Heart right ventricle (tissue), 16 donors: ENCODE measurements at regions of chr4 and their contacts with region 1.

Region 1: GRCh38 chr4:127782274-127783025 is at the start of gene HSPA4L:
- DNase-seq: peak; percentile 43 to 67
- ATAC-seq: peak; percentile 28 to 98 (median 84)
- H3K4me3 ChIP-seq: peak within 1 kb of the TSS; percentile 48 to 91 (median 74)
- H3K27ac ChIP-seq: peak within 1 kb of the TSS; percentile 20 to 85 (median 73)
- H3K4me1 ChIP-seq: peaks cover 0 to 25% (median 10%) of the 10 kb centered on the region in 9 donors
- H3K27me3 ChIP-seq: peaks cover 0 to 46% (median 0%) of the 10 kb centered on the region in 7 donors
- CTCF ChIP-seq: peak in 7 of 9 donors; percentile 28 to 61 (median 38)
- total RNA-seq, gene HSPA4L: 2.4 to 21.9 (median 15.6) TPM

Region 2: DNA sequence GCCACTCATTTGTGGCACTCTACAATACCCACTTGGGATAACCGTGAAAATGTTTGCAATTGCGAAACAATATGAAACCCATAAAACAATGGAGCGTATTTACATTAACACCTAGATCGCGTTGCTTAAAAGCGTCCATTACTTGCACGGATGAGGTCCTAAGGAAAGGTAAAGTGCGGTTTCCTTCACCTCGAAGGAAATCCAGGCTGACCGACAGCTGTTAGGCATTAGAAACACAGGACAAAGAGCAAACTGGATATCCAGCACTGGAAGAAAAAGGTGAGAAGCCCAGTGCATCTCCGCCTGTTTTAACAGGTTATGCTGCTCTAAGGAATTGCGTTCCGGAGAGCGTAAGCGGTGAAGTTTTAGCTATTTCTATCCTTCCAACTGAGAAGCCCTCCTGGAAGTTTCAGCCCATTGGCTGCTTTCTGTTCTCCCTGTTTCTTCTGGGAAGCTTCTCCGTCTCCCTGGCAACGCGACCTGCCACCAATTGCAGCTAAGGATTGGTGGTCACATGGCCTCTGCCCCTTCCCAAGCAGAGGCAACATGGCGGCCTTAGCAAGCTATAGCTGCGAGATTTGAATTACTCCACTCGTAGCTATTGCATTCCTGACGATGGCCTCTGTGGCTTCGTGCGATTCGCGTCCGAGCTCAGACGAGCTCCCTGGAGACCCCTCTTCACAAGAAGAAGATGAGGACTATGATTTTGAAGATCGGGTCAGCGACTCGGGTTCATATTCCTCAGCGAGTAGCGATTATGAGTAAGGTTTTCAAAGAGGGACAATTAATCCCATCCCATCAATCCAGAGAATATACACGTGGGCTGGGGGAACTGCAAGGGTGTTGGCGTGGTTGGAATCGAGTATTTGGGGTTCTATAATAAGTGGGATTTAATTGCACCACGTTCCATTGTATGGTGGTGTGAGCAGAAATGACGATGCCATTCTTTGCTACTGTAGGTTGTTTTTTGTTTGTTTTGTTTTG is 149.7 kb before region 1 on chr4 and contains the start of gene INTU:
- intact Hi-C with region 1: loop called in 1 of 10 experiments (anchors 2 kb)
- DNase-seq: peak; percentile 88 to 94
- ATAC-seq: peak; percentile 98 to 100 (median 100)
- H3K4me3 ChIP-seq: peak within 1 kb of the TSS; percentile 44 to 85 (median 68)
- H3K27ac ChIP-seq: peak within 1 kb of the TSS in 6 of 10 donors; percentile 34 to 73 (median 52)
- H3K4me1 ChIP-seq: peaks cover 0 to 21% (median 9%) of the 10 kb centered on the region in 9 donors
- H3K27me3 ChIP-seq: peaks cover 0 to 6% (median 0%) of the 10 kb centered on the region in 7 donors
- CTCF ChIP-seq: no peak
- total RNA-seq, gene INTU: 3.0 to 6.9 (median 4.5) TPM

Region 3: GRCh38 chr4:127685292-127685691 is 97.2 kb before region 1 on chr4:
- intact Hi-C with region 1: no loop called
- DNase-seq: no peak
- ATAC-seq: no peak
- H3K4me3 ChIP-seq: no peak overlapping the region
- H3K27ac ChIP-seq: no peak overlapping the region
- H3K4me1 ChIP-seq: no peaks in the 10 kb centered on the region
- H3K27me3 ChIP-seq: no peaks in the 10 kb centered on the region
- CTCF ChIP-seq: no peak

Region 4: DNA sequence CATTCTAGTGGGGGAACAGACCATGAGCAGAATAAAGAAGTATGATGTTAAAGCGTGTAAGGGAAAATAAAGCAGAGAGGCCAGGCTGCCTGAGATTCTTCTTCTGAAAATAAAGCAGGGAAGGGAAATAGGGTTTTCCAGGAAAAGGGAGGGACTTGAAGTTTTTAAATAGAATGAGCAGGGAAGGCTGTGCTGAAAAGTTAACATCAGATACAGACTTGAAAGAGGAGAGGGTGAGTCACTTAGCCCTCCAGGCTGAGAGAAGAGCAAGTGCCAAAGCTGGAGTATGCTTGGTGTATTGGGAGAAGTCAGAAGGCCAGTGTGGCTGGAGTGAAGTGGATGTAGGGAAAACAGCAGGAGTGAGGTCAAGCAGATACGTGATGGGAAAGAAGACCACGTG is 88.2 kb after region 1 on chr4:
- intact Hi-C with region 1: loop called in 1 of 10 experiments (anchors 10 kb)
- DNase-seq: peak in 1 of 2 donors; percentile 39
- ATAC-seq: peak in 7 of 8 donors; percentile 58 to 97 (median 91)
- H3K4me3 ChIP-seq: peak overlapping the region in 4 of 10 donors; percentile 4 to 18 (median 11)
- H3K27ac ChIP-seq: peak overlapping the region in 7 of 10 donors; percentile 27 to 73 (median 61)
- H3K4me1 ChIP-seq: peaks cover 0 to 24% (median 15%) of the 10 kb centered on the region in 9 donors
- H3K27me3 ChIP-seq: no peaks in the 10 kb centered on the region
- CTCF ChIP-seq: no peak

Region 5: GRCh38 chr4:127880764-127881562 is 98.5 kb after region 1 on chr4 and contains the start of gene PLK4:
- intact Hi-C with region 1: loop called in 2 of 10 experiments (anchors 5 to 10 kb)
- DNase-seq: peak; percentile 94
- ATAC-seq: peak; percentile 99
- H3K4me3 ChIP-seq: peak within 1 kb of the TSS; percentile 56 to 93 (median 76)
- H3K27ac ChIP-seq: peak within 1 kb of the TSS in 9 of 10 donors; percentile 50 to 89 (median 77)
- H3K4me1 ChIP-seq: peaks cover 0 to 20% (median 15%) of the 10 kb centered on the region in 9 donors
- H3K27me3 ChIP-seq: no peaks in the 10 kb centered on the region
- CTCF ChIP-seq: no peak
- total RNA-seq, gene PLK4: 0.25 to 3.7 (median 0.62) TPM

Region 6: DNA sequence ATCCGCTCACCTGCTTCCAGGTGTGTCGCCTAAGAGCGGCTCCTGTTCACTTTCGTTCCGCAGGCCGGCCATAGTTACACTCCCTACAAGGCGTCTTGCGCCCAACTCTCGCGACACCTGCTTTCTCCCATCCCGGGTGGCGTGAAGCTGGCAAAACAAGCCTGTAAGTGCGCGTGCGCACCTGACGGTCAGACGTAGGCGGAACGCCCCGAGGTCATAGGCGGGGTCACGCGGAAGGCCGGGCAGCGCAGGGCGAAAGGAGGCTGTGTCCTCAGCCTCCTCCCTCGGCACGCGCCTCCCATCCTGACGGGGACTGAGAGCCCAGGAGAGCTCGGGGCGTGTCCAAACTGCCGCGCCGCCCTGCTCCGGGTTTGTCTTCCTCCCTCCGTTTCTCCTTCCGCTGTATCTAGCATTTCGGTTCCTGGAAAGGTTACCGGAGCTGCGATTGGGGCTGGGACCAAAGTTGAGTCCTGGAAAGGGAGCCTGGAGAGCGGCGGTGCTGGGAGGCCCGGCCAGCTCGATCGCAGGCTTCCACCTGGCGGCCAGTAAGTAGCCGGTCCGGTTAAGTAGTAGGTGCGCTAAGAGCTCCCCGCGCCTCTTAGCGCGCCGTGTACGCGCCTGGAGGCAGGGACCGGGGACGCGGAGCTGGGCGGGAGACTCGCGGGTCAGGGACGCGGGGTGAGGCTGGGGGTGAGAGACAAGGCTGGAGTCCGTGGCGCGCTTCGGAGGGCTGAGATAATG is 182.8 kb after region 1 on chr4 and contains the starts of genes ABHD18 and MFSD8:
- intact Hi-C with region 1: loop called in 4 of 10 experiments (anchors 5 to 10 kb)
- DNase-seq: peak; percentile 98 to 99
- ATAC-seq: peak; percentile 97 to 99 (median 97)
- H3K4me3 ChIP-seq: peak within 1 kb of the TSS; percentile 60 to 98 (median 82)
- H3K27ac ChIP-seq: peak within 1 kb of the TSS; percentile 76 to 96 (median 93)
- H3K4me1 ChIP-seq: peaks cover 0 to 54% (median 34%) of the 10 kb centered on the region in 9 donors
- H3K27me3 ChIP-seq: no peaks in the 10 kb centered on the region
- CTCF ChIP-seq: peak in 8 of 9 donors; percentile 19 to 64 (median 44)
- total RNA-seq, gene ABHD18: 12.6 to 55.9 (median 30.4) TPM
- total RNA-seq, gene MFSD8: 6.9 to 14.3 (median 11.0) TPM